ENCODE measurements at regions of chr3 and their contacts with region 1.

Region 1: GRCh38 chr3:150097588-150097890 is 126.8 kb upstream of the PFN2 start:
- DNase-seq: no peak
- H3K4me3 Mint-ChIP-seq: no peak overlapping the region
- H3K27ac Mint-ChIP-seq: peak overlapping the region; percentile 18
- H3K4me1 Mint-ChIP-seq: peaks cover 8% of the 10 kb centered on the region
- H3K27me3 Mint-ChIP-seq: peaks cover 4% of the 10 kb centered on the region

Region 2: DNA sequence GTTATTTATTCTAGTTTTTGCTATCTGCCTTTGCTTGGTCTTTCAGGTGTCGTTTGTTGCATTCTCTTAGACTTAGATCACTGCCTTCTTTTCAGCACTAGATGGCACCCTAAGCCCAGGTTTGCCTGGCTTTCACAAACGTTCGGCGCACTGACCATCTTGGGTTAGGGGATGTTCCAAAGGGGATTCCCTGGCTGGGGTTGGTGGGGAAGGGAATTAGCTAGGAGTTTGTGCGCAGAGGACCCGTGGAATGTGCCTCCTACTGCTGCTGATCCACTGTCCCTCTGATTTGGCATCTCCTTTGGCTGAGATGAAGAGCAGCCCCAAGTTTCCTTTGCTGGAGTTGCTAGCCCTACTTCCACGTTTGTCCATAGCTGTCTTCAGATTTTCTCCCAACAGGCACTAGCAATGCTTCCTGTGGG is 160.7 kb before region 1 on chr3:
- intact Hi-C with region 1: no loop called
- DNase-seq: no peak
- H3K4me3 Mint-ChIP-seq: no peak overlapping the region
- H3K27ac Mint-ChIP-seq: no peak overlapping the region
- H3K4me1 Mint-ChIP-seq: peaks cover 7% of the 10 kb centered on the region
- H3K27me3 Mint-ChIP-seq: no peaks in the 10 kb centered on the region

Region 3: GRCh38 chr3:150114873-150115540 is 17.5 kb after region 1 on chr3:
- intact Hi-C with region 1: loop called (anchors 1 kb)
- DNase-seq: no peak
- H3K4me3 Mint-ChIP-seq: no peak overlapping the region
- H3K27ac Mint-ChIP-seq: no peak overlapping the region
- H3K4me1 Mint-ChIP-seq: no peaks in the 10 kb centered on the region
- H3K27me3 Mint-ChIP-seq: peaks cover 6% of the 10 kb centered on the region

Region 4: GRCh38 chr3:150913133-150913922 is 815.8 kb after region 1 on chr3:
- intact Hi-C with region 1: no loop called
- DNase-seq: no peak
- H3K4me3 Mint-ChIP-seq: no peak overlapping the region
- H3K27ac Mint-ChIP-seq: no peak overlapping the region
- H3K4me1 Mint-ChIP-seq: no peaks in the 10 kb centered on the region
- H3K27me3 Mint-ChIP-seq: peaks cover 25% of the 10 kb centered on the region